GM10248 (cell line): ENCODE measurements at regions of chr12 and their contacts with region 1.

Region 1: DNA sequence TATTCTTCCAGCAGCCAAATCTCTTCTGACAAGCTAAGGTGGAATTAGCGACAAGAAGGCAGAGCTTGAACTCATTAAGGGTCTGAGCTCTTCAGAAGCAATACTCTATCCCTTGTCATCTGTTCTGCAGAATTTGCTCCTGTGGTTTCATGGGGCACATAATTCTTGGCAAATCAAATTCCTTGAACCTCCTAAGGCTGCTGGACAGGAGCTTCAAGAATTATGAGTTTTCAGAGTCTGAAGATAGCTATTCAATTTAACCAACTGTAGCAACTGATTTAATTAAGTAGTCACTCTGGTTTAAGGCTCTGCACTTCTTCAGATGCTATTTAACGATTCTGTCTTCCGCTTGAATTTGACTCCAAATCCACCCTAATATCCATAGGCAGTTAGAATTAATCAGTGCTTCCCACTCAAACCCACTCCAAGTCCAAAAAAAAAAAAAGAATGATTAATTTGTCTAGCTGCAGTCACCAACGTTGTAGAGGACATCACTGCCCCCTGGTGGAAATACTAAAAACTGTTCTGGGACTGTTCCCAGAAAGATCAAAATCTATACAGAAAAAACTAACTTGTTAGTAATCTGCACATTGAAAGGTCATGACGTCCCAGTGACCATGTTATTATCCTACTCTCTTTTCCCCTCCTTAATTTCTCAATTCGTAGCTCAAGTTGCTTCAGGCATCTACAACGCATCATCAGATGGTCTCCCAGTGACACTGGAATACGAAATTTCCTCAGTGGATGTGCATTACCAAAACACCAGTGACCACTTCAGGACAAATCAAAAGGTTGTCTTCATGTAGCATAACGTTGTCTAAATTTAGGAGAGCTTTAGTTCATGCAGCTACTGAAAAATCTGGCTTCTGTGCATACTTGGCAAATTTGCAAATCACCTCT is 169.8 kb downstream of the KIF21A start:
- DNase-seq: no peak
- CTCF ChIP-seq: peak; percentile 59

Region 2: DNA sequence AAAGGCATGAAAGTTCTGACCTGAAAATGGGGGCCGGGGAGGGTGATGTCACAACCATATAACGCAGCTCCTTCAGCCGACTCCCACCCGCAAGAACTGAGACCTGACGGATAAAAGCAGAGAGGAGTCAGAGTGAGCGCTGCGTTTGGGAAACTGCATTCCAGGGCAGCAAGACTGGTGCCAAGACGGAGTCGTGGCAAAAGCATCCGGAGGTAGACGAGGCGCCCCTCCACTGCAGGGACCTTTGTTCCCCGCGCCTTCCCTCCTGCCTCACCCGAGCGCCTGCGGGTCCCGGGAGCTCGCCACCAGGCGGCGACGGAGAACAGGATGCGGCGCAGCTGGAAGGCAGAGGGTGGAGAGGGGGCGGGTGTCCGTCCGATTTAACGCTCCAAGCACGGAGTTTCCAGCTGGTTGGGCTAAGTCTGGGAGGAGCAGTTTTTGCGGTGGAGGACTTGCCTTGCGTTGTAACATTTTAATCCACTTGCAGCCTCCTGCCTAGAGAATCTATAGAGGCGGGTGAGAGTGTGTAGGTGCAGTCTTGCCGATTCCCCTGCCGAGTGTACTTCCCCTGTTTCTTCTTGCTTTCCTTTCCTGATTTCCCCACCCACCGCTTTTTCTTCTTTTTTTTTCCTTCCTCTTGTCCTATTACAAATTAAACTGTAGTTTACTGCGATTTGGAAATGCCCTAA is 366.5 kb before region 1 on chr12:
- CTCF ChIA-PET with region 1: interaction called, 10 read pairs
- POLR2A ChIA-PET with region 1: interaction called, 3 read pairs
- DNase-seq: peak; percentile 78
- CTCF ChIP-seq: peak; percentile 92

Region 3: GRCh38 chr12:38921025-38921677 is 352.0 kb before region 1 on chr12:
- CTCF ChIA-PET with region 1: interaction called, 20 read pairs
- POLR2A ChIA-PET with region 1: no interaction called
- DNase-seq: peak; percentile 23
- CTCF ChIP-seq: peak; percentile 53

Region 4: GRCh38 chr12:39252628-39253027 is 20.5 kb before region 1 on chr12:
- CTCF ChIA-PET with region 1: interaction called, 19 read pairs
- POLR2A ChIA-PET with region 1: no interaction called
- DNase-seq: no peak
- CTCF ChIP-seq: no peak

Region 5: GRCh38 chr12:39287817-39288216 is 14.7 kb after region 1 on chr12:
- CTCF ChIA-PET with region 1: interaction called, 28 read pairs
- POLR2A ChIA-PET with region 1: no interaction called
- DNase-seq: no peak
- CTCF ChIP-seq: no peak

Region 6: DNA sequence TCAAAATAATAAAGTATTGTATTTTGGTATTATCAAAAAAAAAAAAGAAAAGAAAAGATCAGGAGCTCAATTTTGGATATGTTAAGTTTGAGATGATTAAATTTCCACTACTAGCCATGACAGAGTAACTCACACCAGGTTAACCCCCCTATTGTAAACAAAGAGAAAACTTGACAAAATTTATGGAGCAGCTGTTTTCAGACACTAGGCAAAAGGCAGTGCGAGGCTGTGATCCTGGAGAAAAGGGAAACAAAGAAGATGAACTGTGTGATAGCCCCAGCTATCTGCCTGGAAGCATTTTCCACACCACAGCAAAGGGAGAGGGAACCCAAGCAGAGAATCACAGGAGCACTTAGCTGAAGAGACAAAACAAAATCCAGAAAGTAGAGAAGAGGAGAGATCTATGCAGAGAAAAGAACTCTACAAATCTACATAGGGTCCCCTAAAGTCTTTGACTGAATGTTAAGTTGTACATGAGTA is 24.8 kb after region 1 on chr12:
- CTCF ChIA-PET with region 1: interaction called, 12 read pairs
- POLR2A ChIA-PET with region 1: no interaction called
- DNase-seq: no peak
- CTCF ChIP-seq: no peak